ENCODE measurements at regions of chr13 and their contacts with region 1.

Region 1: DNA sequence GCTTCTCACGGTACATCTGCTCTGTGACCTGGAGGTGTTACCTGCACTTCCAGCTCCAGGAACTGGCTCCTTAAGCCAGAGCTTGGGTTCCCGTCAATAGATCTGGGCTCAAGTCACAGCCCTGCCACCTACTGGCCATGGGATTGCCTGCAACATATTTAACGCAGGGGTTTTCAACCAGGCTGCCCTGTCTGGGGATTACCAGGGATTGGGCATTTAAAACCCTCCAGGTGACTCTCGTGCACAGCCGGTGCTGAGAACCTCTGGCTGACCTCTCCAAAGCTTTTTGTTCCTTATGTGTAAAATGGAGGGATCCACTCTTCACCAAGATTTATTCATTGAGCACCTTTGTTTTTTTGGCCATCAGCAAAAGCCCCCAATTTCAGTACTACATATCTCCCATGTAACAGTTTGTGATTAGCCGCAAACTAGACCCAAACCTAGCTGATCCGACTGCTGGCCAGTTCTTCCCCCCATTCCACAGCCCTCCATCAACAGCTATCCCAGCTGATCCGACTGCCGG is 76.6 kb upstream of the STK24 start:
- DNase-seq: peak; percentile 88
- ATAC-seq: peak; percentile 99
- H3K4me3 Mint-ChIP-seq: no peak overlapping the region
- H3K27ac Mint-ChIP-seq: no peak overlapping the region
- H3K4me1 Mint-ChIP-seq: peaks cover 4% of the 10 kb centered on the region
- H3K27me3 Mint-ChIP-seq: peaks cover 2% of the 10 kb centered on the region
- CTCF ChIP-seq: peak; percentile 93

Region 2: DNA sequence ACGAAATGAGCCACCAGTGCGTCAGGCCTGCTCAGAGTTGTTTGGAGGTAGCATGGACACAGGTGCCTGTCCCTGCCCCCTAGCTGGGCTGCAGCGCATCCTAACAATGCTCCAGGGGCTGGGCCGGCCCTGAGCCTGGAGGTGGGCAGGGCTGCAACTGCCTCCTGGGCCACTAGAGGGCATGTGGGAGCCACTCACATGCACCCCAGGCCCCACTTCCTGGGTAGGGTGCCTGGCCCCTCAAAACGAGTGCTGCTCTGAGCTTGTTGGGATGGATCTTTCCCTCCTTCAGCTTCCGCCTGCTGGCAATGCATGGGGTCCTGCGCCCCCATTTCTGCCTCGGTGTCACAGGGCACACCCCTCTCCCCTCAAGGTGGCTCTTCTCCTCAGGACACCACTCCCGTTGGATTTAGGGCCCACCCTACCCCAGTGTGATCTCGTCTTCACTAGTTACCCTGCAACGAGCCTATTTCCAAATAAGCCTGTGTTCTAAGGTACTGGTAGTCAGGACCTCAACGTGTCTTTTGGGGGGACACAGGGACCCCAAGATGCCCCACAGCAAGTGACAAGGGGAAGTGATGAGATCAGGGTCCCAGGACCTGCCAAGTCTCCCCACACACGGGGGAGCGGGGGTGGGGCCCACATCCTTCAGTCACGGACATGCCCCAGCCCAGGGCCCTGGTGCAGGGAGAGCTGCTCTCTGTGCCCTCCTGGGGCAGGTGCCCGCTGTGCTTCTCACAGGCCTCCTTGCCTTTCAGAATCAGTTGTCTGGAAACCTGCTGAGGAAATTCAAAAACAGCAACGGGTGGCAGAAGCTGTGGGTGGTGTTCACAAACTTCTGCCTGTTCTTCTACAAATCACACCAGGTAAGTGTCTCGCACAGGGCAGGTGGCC is 207.9 kb before region 1 on chr13:
- CTCF ChIA-PET with region 1: interaction called, 160 read pairs
- POLR2A ChIA-PET with region 1: interaction called, 4 read pairs
- intact Hi-C with region 1: loop called (anchors 2 kb)
- DNase-seq: peak; percentile 89
- ATAC-seq: peak; percentile 97
- H3K4me3 Mint-ChIP-seq: no peak overlapping the region
- H3K27ac Mint-ChIP-seq: peak overlapping the region; percentile 92
- H3K4me1 Mint-ChIP-seq: peaks cover 16% of the 10 kb centered on the region
- H3K27me3 Mint-ChIP-seq: no peaks in the 10 kb centered on the region
- CTCF ChIP-seq: peak; percentile 94

Region 3: DNA sequence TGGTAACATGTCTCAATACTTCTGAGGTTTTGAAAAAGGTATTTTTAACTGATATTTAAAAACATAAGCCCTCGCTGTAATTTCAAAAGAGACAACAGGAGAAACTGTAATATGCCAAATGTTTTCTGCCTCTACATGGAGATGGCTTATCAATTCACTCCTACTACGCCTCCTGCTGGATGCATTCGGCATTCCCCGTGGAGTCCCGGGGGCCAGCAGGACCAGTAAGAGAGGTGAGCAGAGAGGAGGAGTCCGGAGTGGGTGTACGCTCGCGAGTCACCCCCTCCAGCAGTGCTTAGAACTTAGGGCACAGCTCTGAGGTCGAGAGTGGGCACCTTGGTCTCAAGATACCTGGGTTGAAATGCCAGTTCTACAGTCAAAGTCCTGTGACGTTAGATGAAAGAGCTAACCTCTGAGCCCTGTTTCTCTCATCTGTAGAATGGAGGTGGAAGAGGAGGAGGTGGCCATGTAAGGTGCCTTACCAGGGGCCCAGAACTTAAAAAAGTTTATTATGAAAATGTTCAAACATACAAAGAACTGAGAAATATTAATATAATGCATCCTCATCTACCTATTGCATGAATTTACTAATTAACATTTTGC is 186.8 kb before region 1 on chr13:
- CTCF ChIA-PET with region 1: interaction called, 19 read pairs
- POLR2A ChIA-PET with region 1: no interaction called
- intact Hi-C with region 1: no loop called
- DNase-seq: peak; percentile 80
- ATAC-seq: peak; percentile 96
- H3K4me3 Mint-ChIP-seq: no peak overlapping the region
- H3K27ac Mint-ChIP-seq: peak overlapping the region; percentile 56
- H3K4me1 Mint-ChIP-seq: peaks cover 34% of the 10 kb centered on the region
- H3K27me3 Mint-ChIP-seq: no peaks in the 10 kb centered on the region
- CTCF ChIP-seq: peak; percentile 48

Region 4: DNA sequence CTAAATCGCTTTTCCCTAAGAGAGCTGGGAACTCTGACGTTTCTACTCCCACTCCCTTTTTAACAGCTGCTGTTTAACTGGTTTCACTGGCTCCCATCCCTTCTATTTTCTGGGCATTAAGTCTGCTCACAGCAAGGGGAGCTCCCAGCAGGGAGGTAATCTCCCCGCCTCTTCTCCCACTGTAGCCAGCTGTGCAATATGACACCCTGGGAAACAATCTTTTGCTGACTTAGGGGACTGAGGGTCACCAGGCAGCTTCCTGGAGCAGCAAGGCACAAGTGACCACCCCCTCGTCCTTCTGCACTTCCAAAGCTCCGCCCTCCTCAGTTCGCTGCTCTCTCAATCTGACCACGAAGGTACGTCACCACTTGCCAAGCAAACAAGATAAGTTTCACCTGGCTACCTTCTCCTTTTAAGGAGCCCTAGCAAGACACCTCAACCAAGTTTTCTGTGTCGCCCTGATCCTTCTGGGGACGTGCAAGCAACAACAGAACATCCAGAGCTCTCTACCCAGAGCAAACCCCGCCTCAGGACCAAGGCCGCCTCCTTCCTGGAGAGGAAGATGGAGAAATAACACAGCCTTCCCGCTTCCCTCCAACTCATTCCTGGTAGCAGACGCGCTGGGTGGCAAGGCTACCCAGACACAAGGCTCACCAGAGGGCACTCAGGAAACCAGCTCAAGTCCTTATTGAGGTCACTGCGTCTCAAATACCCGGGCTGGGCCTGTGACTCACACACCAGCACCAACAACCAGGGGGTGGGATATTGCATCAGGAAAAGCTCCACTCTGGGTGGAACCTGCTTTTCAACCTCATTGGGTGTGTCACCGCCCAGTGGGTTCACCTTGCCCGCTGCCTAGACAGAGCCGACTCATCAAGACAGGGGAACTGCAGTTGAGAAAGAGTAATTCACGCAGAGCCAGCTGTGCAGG is 169.0 kb before region 1 on chr13:
- CTCF ChIA-PET with region 1: interaction called, 20 read pairs
- POLR2A ChIA-PET with region 1: no interaction called
- intact Hi-C with region 1: no loop called
- DNase-seq: peak; percentile 84
- ATAC-seq: peak; percentile 70
- H3K4me3 Mint-ChIP-seq: no peak overlapping the region
- H3K27ac Mint-ChIP-seq: peak overlapping the region; percentile 75
- H3K4me1 Mint-ChIP-seq: peaks cover 86% of the 10 kb centered on the region
- H3K27me3 Mint-ChIP-seq: no peaks in the 10 kb centered on the region
- CTCF ChIP-seq: no peak

Region 5: GRCh38 chr13:98632961-98633360 is 20.6 kb before region 1 on chr13:
- CTCF ChIA-PET with region 1: interaction called, 11 read pairs
- POLR2A ChIA-PET with region 1: no interaction called
- intact Hi-C with region 1: no loop called
- DNase-seq: no peak
- ATAC-seq: no peak
- H3K4me3 Mint-ChIP-seq: no peak overlapping the region
- H3K27ac Mint-ChIP-seq: no peak overlapping the region
- H3K4me1 Mint-ChIP-seq: no peaks in the 10 kb centered on the region
- H3K27me3 Mint-ChIP-seq: no peaks in the 10 kb centered on the region
- CTCF ChIP-seq: no peak

Region 6: GRCh38 chr13:98664039-98664438 is 10.5 kb after region 1 on chr13:
- CTCF ChIA-PET with region 1: interaction called, 22 read pairs
- POLR2A ChIA-PET with region 1: interaction called, 3 read pairs
- intact Hi-C with region 1: no loop called
- DNase-seq: peak; percentile 74
- ATAC-seq: peak; percentile 97
- H3K4me3 Mint-ChIP-seq: no peak overlapping the region
- H3K27ac Mint-ChIP-seq: peak overlapping the region; percentile 51
- H3K4me1 Mint-ChIP-seq: peaks cover 20% of the 10 kb centered on the region
- H3K27me3 Mint-ChIP-seq: no peaks in the 10 kb centered on the region
- CTCF ChIP-seq: no peak

Region 7: DNA sequence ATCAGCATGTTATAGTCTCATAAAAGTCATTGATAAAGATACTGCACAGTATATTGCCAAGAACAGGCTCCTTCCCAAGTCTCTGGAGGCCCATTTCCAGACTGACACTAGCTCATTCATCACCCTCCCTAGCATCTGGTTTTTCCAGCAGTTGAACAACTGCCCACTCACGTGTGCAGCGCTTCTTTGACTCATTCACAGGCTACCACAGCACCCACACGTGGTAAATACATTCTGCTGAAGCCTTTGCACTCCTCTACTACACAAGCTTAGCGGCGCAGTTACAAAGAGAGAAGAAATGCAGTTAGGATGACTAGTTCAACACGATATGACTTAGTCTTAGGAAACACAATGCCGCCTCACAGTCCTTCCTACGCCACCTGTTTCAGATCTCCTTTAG is 236.7 kb after region 1 on chr13:
- CTCF ChIA-PET with region 1: no interaction called
- POLR2A ChIA-PET with region 1: no interaction called
- intact Hi-C with region 1: no loop called
- DNase-seq: peak; percentile 78
- ATAC-seq: peak; percentile 94
- H3K4me3 Mint-ChIP-seq: no peak overlapping the region
- H3K27ac Mint-ChIP-seq: peak overlapping the region; percentile 30
- H3K4me1 Mint-ChIP-seq: peaks cover 21% of the 10 kb centered on the region
- H3K27me3 Mint-ChIP-seq: no peaks in the 10 kb centered on the region
- CTCF ChIP-seq: no peak

Region 8: GRCh38 chr13:99033814-99034213 is 380.3 kb after region 1 on chr13:
- CTCF ChIA-PET with region 1: no interaction called
- POLR2A ChIA-PET with region 1: no interaction called
- intact Hi-C with region 1: no loop called
- DNase-seq: no peak
- ATAC-seq: peak; percentile 71
- H3K4me3 Mint-ChIP-seq: no peak overlapping the region
- H3K27ac Mint-ChIP-seq: no peak overlapping the region
- H3K4me1 Mint-ChIP-seq: peaks cover 43% of the 10 kb centered on the region
- H3K27me3 Mint-ChIP-seq: no peaks in the 10 kb centered on the region
- CTCF ChIP-seq: peak; percentile 46